Right ventricle myocardium superior (tissue), 1 donor: ENCODE measurements at regions of chr17 and their contacts with region 1.

Region 1: GRCh38 chr17:64262417-64263260 is at the start of gene TEX2:
- DNase-seq: peak; percentile 80
- ATAC-seq: peak; percentile 76
- total RNA-seq, gene TEX2: 54.0 TPM

Region 2: DNA sequence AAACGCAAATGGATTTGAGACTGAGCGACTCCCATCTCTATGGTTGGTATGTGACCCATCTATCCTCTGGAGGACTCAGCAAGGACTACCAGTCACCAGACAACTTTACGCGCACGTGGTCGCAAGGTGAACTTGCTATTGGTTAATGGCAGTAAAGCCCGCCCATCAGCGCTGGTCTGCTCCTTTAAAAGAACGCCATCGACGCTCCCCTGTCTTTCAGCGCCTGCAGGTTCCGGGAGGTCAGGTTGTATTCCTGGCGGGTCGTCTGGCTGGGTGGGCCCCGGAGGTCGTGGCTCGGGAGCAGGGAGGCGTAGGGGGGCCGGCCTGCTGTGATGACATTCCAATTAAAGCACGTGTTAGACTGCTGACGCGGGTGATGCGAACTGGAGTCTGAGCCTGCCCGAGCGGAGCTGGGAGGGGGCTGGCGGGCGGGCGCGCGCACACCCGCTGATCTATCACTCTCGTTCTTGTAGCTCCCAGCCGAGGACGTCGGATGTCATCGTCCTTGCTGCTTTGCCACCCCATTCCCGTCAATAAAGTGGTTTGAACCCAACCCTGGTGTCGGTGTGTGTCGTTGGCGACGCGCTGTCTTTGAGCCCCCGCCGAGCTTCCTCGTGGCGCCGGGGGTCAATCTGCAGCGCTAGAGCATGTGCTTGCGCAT is 116.8 kb before region 1 on chr17:
- intact Hi-C with region 1: loop called (anchors 5 kb)
- DNase-seq: peak; percentile 98
- ATAC-seq: peak; percentile 95